Activated CD4-positive, alpha-beta memory T cell treated with anti-CD3 and anti-CD28 coated beads for 36 hours (primary cell): ENCODE measurements at regions of chr2 and their contacts with region 1.

Region 1: GRCh38 chr2:55175254-55176025 is 56.7 kb downstream of the CLHC1 start:
- DNase-seq: no peak
- H3K4me3 Mint-ChIP-seq: no peak overlapping the region
- H3K27ac Mint-ChIP-seq: no peak overlapping the region
- H3K4me1 Mint-ChIP-seq: peaks cover 10% of the 10 kb centered on the region
- H3K27me3 Mint-ChIP-seq: no peaks in the 10 kb centered on the region

Region 2: GRCh38 chr2:54763636-54764291 is 411.7 kb before region 1 on chr2:
- CTCF ChIA-PET with region 1: no interaction called
- POLR2A ChIA-PET with region 1: no interaction called
- intact Hi-C with region 1: loop called (anchors 1 kb)
- DNase-seq: peak; percentile 51
- H3K4me3 Mint-ChIP-seq: no peak overlapping the region
- H3K27ac Mint-ChIP-seq: no peak overlapping the region
- H3K4me1 Mint-ChIP-seq: peaks cover 8% of the 10 kb centered on the region
- H3K27me3 Mint-ChIP-seq: peaks cover 2% of the 10 kb centered on the region

Region 3: GRCh38 chr2:55232084-55232862 is 56.8 kb after region 1 on chr2 and contains the starts of genes CLHC1 and RPS27A:
- CTCF ChIA-PET with region 1: no interaction called
- POLR2A ChIA-PET with region 1: no interaction called
- intact Hi-C with region 1: no loop called
- DNase-seq: peak; percentile 95
- H3K4me3 Mint-ChIP-seq: peak within 1 kb of the TSS; percentile 96
- H3K27ac Mint-ChIP-seq: peak within 1 kb of the TSS; percentile 94
- H3K4me1 Mint-ChIP-seq: peaks cover 60% of the 10 kb centered on the region
- H3K27me3 Mint-ChIP-seq: no peaks in the 10 kb centered on the region
- total RNA-seq, gene CLHC1: 5.5 to 7.5 TPM
- total RNA-seq, gene RPS27A: 1,372 to 1,402 TPM